Heart left ventricle (tissue), 16 donors: ENCODE measurements at regions of chr20 and their contacts with region 1.

Region 1: DNA sequence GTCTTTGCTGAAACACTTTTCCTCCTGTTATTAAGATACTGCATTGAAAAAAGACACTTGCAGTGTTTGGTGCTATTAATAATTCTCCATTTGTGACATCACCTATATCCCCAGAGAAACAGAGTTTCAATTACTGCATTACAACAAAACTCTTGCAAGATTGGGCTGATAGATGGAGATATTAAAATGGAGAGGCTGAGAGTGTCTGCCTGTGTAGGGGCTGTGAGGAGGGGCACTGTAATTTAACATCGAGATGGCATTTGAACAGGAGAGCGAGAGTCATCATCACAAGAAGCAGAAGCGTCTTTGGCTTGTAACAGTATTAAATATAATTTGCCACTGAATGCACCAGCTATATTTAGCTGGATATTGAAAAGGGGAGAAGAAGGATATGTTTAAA is 316.5 kb downstream of the CDH26 start:
- DNase-seq: no peak
- ATAC-seq: no peak
- H3K4me3 ChIP-seq: no peak overlapping the region
- H3K27ac ChIP-seq: no peak overlapping the region
- H3K4me1 ChIP-seq: no peaks in the 10 kb centered on the region
- H3K27me3 ChIP-seq: peaks cover 0 to 17% (median 0%) of the 10 kb centered on the region in 9 donors
- CTCF ChIP-seq: no peak
- POLR2A ChIP-seq: no peak

Region 2: DNA sequence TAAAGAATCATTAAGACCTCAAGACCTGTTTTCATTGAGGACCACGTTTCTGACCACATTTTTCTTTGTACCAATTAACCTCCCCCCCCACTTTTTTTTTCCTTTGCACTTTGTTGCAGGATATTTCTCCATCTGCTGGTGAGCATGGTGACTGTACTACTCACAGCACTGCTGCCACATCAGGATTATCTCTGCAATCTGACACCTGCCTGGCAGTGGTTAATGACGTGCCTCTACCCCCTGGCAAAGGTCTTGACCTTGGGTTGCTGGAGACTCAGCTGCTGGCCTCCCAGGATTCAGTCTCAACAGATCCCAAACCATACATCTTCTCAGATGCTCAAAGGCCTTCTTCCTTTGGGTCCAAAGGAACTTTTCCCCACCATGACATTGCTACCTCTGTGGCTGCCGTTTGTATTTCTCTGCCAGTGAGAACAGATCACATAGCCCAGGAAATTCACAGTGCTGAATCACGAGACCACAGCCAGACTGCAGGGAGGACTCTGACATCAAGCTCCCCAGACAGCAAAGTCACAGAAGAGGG is 1020.9 kb before region 1 on chr20:
- intact Hi-C with region 1: no loop called
- DNase-seq: no peak
- ATAC-seq: no peak
- H3K4me3 ChIP-seq: no peak overlapping the region
- H3K27ac ChIP-seq: no peak overlapping the region
- H3K4me1 ChIP-seq: peaks cover 0 to 7% (median 0%) of the 10 kb centered on the region in 12 donors
- H3K27me3 ChIP-seq: peaks cover 0 to 43% (median 4%) of the 10 kb centered on the region in 9 donors
- CTCF ChIP-seq: no peak
- POLR2A ChIP-seq: no peak

Region 3: DNA sequence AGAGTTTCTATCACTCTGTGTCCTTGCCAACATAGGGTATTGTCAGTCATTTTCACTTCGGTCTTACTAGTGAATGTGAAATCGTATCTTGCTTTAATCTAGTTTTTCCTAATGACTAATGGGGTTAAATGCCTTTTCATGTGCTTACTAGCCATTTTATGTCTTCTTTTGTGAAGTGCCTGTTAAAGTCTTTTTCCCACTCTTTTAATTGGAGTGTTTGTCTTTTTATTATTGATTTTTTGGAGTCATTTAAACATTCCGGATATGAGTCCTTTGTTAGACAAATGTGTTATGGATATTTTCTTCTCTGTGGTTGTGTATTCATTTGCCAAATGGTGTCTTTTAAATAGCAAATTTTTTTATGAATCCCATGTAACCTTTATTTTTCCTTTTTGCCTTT is 121.9 kb before region 1 on chr20:
- intact Hi-C with region 1: no loop called
- DNase-seq: no peak
- ATAC-seq: no peak
- H3K4me3 ChIP-seq: no peak overlapping the region
- H3K27ac ChIP-seq: no peak overlapping the region
- H3K4me1 ChIP-seq: no peaks in the 10 kb centered on the region
- H3K27me3 ChIP-seq: no peaks in the 10 kb centered on the region
- CTCF ChIP-seq: no peak
- POLR2A ChIP-seq: no peak

Region 4: GRCh38 chr20:60224914-60225313 is 49.8 kb before region 1 on chr20:
- intact Hi-C with region 1: loop called in 1 of 10 experiments (anchors 5 kb)
- DNase-seq: no peak
- ATAC-seq: no peak
- H3K4me3 ChIP-seq: no peak overlapping the region
- H3K27ac ChIP-seq: no peak overlapping the region
- H3K4me1 ChIP-seq: no peaks in the 10 kb centered on the region
- H3K27me3 ChIP-seq: peaks cover 0 to 17% (median 0%) of the 10 kb centered on the region in 9 donors
- CTCF ChIP-seq: peak in 3 of 12 donors; percentile 17 to 21 (median 18)
- POLR2A ChIP-seq: no peak

Region 5: DNA sequence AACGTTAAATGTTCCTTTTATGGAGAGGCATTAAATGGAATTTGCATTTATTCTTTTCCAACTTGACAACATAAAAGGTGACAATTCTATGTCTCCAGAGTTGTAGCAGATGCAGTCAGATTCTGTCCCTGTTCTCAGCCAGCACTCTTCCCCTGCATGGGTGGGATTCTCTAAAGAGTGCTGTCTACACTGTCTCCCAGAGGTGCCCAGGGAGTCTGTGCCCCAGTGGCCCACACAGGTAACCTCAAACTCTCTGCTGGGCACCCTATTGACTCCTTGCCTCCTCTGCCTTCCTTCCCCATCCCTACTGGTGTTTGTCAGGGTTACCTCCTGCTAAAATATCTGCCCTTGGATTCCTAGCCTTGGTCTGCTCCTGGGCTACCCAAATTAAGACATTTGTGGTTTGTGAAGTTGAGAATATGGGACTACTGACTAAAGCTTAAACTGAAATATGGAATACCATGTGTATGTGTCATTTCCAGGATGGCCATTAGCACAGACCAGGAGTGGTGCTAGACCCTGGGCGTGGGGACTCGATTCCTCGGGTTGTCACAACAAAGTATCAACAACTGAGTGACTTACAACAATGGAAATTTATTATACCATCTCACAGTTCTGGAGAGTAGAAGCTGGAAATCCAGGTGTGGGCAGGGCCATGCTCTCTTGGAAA is 31.7 kb before region 1 on chr20:
- intact Hi-C with region 1: no loop called
- DNase-seq: no peak
- ATAC-seq: no peak
- H3K4me3 ChIP-seq: no peak overlapping the region
- H3K27ac ChIP-seq: no peak overlapping the region
- H3K4me1 ChIP-seq: no peaks in the 10 kb centered on the region
- H3K27me3 ChIP-seq: peaks cover 0 to 16% (median 0%) of the 10 kb centered on the region in 9 donors
- CTCF ChIP-seq: no peak
- POLR2A ChIP-seq: no peak